Heart left ventricle (tissue), 16 donors: ENCODE measurements at regions of chr11 and their contacts with region 1.

Region 1: GRCh38 chr11:66579017-66579606 is 10.7 kb upstream of the CTSF start:
- DNase-seq: peak; percentile 79 to 90 (median 82)
- ATAC-seq: peak; percentile 78 to 97 (median 88)
- H3K4me3 ChIP-seq: no peak overlapping the region
- H3K27ac ChIP-seq: no peak overlapping the region
- H3K4me1 ChIP-seq: peaks cover 0 to 8% (median 0%) of the 10 kb centered on the region in 12 donors
- H3K27me3 ChIP-seq: no peaks in the 10 kb centered on the region
- CTCF ChIP-seq: peak; percentile 72 to 87 (median 82)
- POLR2A ChIP-seq: no peak

Region 2: DNA sequence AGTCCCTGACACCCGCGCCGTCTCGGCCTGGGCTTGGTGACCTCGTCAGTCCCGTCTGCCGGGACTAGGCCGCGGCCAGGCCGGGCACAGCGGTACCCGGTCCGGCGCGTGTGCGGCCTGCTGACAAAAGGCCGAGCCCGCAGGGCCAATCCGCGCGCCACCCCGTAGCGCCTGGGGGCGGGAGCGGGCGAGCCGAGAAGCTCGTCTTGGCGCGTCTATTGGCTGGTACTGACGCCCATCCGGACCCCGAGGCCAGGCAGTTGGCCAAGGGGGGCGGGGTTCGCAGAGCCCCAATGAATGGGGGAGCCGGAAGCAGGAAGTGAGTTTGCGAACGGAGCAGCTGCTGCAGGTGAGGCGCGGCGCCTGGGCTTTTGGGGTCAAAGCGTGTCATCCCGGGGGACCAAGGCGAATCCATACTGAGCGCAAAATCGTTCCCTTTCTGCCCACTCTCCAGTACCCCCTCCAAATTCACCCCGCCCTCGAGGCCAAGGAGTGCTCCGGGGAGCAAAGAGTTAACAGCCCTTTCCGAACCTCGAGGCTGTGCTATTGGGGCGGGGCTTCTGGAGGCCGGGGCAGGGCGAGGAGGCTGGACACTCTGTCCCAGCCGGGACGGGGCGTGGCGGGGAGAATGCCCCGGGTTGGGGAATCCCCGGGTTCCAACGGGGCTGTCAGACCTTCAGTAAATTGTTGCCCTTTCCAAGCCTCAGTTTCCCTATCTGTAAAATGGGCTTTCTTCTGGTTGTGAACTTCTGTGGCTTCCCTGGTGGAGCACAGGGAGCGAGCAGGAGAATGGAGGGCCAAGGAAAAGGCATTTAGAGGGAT is 98.8 kb before region 1 on chr11 and contains the start of gene DPP3:
- intact Hi-C with region 1: no loop called
- DNase-seq: peak; percentile 98 to 99 (median 98)
- ATAC-seq: peak; percentile 96 to 98 (median 96)
- H3K4me3 ChIP-seq: peak within 1 kb of the TSS; percentile 58 to 93 (median 76)
- H3K27ac ChIP-seq: peak within 1 kb of the TSS; percentile 64 to 94 (median 88)
- H3K4me1 ChIP-seq: peaks cover 0 to 19% (median 10%) of the 10 kb centered on the region in 12 donors
- H3K27me3 ChIP-seq: no peaks in the 10 kb centered on the region
- CTCF ChIP-seq: peak in 1 of 12 donors; percentile 3
- POLR2A ChIP-seq: peak in 1 of 2 donors; percentile 91
- total RNA-seq, gene DPP3: 6.2 to 43.1 (median 14.9) TPM

Region 3: DNA sequence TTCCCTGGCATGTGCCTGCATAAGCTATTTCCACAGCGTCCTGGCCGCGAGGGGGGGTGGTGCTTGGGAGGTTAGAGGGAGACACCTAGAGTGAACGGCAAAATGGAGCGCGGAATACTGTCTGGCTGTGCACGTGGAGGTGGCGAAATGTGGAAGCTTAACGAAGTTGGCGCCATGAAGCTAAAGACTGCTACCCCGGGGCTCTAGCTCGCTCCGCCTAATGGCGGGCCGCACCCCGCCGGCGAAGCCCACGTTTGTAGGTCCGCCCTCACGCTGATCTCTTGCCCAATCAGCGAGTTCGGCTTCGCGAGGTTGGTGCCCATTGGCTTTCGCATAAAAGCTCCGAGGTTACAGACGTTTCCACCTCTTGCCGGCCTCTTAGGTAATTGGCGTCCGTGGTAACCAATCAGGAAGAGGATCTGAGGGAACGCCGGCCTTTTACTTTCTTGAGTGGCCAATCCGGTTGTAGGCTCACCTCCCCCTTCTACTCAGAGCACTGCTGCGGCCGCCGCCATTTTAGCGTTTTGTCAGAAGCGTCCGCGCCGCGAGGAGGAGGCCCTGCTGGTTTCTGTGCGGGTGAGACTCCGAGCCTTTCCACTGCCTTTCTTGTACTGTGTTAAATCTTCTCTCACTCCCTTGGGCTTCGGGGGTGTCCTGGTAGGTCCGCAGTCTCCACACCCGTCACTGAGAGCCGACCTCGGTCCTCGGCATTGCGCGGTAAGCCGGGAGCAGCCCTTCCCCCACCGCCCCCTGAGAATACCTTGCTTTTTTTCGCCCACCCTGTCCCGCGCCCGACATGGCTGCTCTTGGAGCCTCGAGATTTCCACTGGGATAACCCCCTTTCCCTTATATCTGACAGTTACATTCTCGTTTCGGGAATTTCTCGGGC is 59.3 kb after region 1 on chr11 and contains the start of gene RBM4:
- intact Hi-C with region 1: loop called in 1 of 10 experiments (anchors 2 kb)
- DNase-seq: peak; percentile 96 to 99 (median 98)
- ATAC-seq: peak; percentile 97 to 99 (median 98)
- H3K4me3 ChIP-seq: peak within 1 kb of the TSS; percentile 56 to 94 (median 75)
- H3K27ac ChIP-seq: peak within 1 kb of the TSS; percentile 43 to 93 (median 88)
- H3K4me1 ChIP-seq: peaks cover 17 to 64% (median 49%) of the 10 kb centered on the region in 12 donors
- H3K27me3 ChIP-seq: no peaks in the 10 kb centered on the region
- CTCF ChIP-seq: peak in 3 of 12 donors; percentile 9 to 30 (median 28)
- POLR2A ChIP-seq: peak; percentile 59 to 83
- total RNA-seq, gene RBM4: 46.4 to 89.4 (median 56.6) TPM

Region 4: GRCh38 chr11:66967670-66968425 is 388.7 kb after region 1 on chr11:
- intact Hi-C with region 1: no loop called
- DNase-seq: peak in 1 of 5 donors; percentile 67
- ATAC-seq: peak in 2 of 4 donors; percentile 38 to 42
- H3K4me3 ChIP-seq: no peak overlapping the region
- H3K27ac ChIP-seq: peak overlapping the region in 2 of 12 donors; percentile 42 to 52
- H3K4me1 ChIP-seq: peaks cover 0 to 27% (median 0%) of the 10 kb centered on the region in 12 donors
- H3K27me3 ChIP-seq: no peaks in the 10 kb centered on the region
- CTCF ChIP-seq: no peak
- POLR2A ChIP-seq: no peak